Common myeloid progenitor, CD34-positive (primary cell): ENCODE measurements at regions of chr12 and their contacts with region 1.

Region 1: DNA sequence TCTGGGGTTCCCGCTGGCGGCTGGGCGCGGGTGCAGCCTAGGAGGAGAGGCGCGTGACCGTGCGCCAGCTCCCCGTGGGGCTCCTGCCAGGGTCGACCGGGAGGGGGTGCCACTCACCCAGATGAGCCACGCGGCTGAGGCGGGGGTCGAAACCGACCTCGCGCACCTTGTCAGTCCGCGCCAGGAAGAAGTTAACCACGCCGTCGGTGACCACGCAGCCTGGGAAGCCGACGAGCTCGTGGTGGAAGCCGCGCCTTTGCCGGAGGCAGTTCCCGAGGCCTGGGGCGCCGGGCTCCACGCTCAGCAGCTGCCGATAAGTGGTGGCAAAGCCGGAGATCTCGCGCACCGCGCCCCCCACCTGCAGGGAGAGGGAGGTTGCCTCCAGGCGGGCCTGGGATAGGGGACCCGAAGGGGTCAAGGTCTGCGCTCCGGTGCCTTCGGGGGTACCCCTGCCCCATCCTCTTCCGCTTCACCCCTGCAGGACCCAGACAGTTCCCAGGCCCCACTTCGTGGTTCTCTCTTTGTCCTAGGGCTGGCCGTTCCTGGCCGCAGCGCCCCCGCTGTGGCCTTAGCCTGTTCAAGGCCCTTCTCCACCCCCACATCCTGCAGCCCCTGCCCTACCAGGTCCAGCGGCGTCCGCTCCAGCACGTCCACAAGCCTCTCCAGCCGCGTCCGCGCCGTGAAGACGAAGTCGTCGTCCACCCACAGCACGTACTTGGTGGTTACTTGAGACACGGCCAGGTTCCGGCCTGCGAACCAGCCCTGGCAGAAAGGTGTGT is 5.3 kb downstream of the B4GALNT1 start:
- DNase-seq: peak; percentile 32 to 70 (median 56)
- H3K4me3 ChIP-seq: peak overlapping the region in 6 of 7 experiments; percentile 0 to 59 (median 26)
- H3K27ac ChIP-seq: no peak overlapping the region
- H3K4me1 ChIP-seq: peaks cover 0 to 21% (median 16%) of the 10 kb centered on the region in 4 experiments
- H3K27me3 ChIP-seq: peaks cover 5 to 99% (median 47%) of the 10 kb centered on the region in 5 experiments

Region 2: DNA sequence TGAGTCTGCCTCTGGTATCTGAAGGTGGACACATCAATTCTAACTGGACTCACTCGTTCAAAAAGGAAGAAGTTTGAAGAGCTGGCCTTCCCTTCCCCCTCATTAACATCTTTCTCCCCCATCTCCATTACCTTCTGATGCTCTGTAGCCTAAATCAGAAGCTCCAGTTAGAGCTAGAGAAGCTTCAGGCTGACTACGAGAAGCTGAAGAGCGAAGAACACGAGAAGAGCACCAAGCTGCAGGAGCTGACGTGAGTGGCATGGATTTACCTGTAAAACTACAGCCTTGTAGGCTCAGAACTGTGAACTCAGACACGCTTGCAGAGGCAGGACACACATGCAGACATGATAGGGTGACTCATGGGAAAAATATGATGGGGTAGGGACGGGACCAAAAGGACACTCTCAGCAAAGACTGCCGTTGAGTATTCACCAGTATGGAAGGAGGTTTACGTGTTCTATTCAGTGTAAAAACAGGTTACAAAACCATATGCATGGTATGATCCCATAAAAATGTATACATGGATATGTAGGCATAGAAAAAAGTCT is 51.0 kb before region 1 on chr12:
- CTCF ChIA-PET with region 1: interaction called, 121 read pairs
- POLR2A ChIA-PET with region 1: no interaction called
- DNase-seq: no peak
- H3K4me3 ChIP-seq: no peak overlapping the region
- H3K27ac ChIP-seq: no peak overlapping the region
- H3K4me1 ChIP-seq: no peaks in the 10 kb centered on the region
- H3K27me3 ChIP-seq: peaks cover 0 to 11% (median 0%) of the 10 kb centered on the region in 5 experiments

Region 3: GRCh38 chr12:57614178-57614947 is 13.3 kb before region 1 on chr12:
- CTCF ChIA-PET with region 1: interaction called, 35 read pairs
- POLR2A ChIA-PET with region 1: no interaction called
- DNase-seq: peak; percentile 29 to 58 (median 58)
- H3K4me3 ChIP-seq: no peak overlapping the region
- H3K27ac ChIP-seq: no peak overlapping the region
- H3K4me1 ChIP-seq: peaks cover 0 to 22% (median 11%) of the 10 kb centered on the region in 4 experiments
- H3K27me3 ChIP-seq: peaks cover 0 to 74% (median 51%) of the 10 kb centered on the region in 5 experiments

Region 4: GRCh38 chr12:57896434-57897201 is 268.9 kb after region 1 on chr12:
- CTCF ChIA-PET with region 1: no interaction called
- POLR2A ChIA-PET with region 1: no interaction called
- DNase-seq: peak in 1 of 3 donors; percentile 30
- H3K4me3 ChIP-seq: peak overlapping the region; percentile 40 to 75 (median 50)
- H3K27ac ChIP-seq: no peak overlapping the region
- H3K4me1 ChIP-seq: peaks cover 23 to 68% (median 61%) of the 10 kb centered on the region in 4 experiments
- H3K27me3 ChIP-seq: no peaks in the 10 kb centered on the region

Region 5: DNA sequence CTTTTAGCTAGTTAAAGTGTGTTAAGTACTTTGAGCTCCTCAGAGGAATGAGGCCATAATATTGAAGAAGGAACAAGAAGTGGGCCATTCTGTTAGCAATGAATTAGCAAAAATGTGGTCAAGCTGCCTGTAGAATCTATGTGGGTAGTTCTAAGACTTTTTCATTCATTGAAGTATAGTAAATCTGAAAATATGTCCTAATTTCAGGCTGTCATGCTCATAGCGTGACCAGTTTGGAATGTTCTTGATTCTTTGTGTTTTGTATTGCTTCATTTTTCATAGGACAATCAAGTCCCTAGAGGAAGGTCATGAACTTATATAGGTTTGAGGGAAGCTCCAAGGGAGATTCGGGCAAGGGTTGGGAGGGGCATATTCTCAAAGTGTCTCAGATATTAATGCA is 325.1 kb after region 1 on chr12:
- CTCF ChIA-PET with region 1: no interaction called
- POLR2A ChIA-PET with region 1: no interaction called
- DNase-seq: no peak
- H3K4me3 ChIP-seq: no peak overlapping the region
- H3K27ac ChIP-seq: no peak overlapping the region
- H3K4me1 ChIP-seq: no peaks in the 10 kb centered on the region
- H3K27me3 ChIP-seq: no peaks in the 10 kb centered on the region